ENCODE measurements at regions of chr7 and their contacts with region 1.

Region 1: DNA sequence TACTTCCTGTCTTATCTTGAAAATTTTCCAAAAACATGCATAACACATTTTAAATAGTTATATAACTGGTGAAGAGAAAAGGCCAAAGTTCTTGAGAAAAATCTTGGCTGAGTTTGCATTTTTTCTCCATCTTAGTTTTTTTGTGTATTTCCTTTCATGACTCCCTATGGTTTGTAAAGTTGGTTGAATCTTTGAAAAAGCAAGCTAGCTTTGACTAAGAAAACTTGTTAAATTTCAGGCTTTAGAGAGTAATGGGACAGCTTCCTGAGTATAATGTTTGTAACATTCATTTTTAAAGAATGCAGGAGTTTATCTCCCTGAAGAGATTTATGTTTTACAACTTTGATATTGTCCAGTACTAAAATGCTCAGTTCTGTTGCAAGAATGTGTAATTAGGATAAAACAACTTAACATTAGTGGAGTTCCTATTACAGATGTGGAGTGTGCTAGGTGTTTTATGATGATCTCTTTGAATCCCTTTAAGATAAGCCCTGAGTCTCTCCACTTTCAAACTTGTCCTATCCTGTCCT is 11.1 kb upstream of the HERPUD2 start:
- DNase-seq: no peak
- ATAC-seq: no peak

Region 2: GRCh38 chr7:35906191-35906908 is 200.4 kb after region 1 on chr7:
- intact Hi-C with region 1: loop called (anchors 2 kb)
- DNase-seq: no peak
- ATAC-seq: peak; percentile 93

Measured in Right ventricle myocardium superior (tissue), 1 donor.